ENCODE measurements at regions of chr17 and their contacts with region 1.

Region 1: GRCh38 chr17:29722411-29723198 is 99.9 kb upstream of the CORO6 start:
- DNase-seq: peak; percentile 69
- CTCF ChIP-seq: no peak

Region 2: DNA sequence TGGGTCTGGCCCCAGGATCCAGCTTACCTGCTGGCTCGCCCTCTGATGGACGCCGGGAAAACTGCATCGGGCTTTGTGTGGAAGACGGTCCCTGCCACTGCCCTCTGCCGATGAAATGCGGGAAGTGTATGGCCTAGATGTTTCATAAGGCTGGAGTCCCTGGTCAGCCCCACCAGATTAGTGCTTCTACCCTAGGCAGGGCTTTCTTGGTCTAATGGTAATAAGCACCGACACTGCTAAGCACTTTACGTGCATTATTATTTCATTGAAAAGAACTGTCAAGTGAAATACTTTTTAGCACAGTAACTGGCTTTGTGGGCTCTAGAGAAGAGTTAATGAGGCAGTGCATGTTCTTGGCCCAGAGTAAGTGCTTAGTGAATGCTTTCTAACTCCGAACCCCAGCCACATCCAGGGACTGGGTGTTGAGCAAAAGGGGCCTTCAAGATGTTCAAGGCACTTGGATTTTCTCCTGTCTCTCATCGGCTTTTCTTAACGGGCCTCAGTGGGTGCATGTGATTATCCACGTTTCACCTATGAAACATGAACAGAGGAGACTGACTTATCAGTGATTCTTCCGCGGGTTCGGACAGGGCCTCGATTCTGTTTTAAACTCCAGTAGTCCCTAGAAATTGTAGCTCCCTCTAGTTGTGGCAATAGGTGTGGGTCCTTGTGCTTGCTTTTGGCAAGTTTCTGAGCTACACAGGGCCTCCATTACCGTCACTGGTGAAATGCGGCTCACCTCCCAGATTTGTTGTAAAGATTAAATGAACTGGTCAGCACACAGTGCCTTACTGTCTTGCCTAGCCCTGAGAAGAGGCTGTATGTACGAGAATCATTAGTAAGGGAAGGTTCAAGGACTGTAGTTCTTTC is 972.2 kb before region 1 on chr17:
- CTCF ChIA-PET with region 1: no interaction called
- POLR2A ChIA-PET with region 1: no interaction called
- DNase-seq: peak; percentile 84
- CTCF ChIP-seq: peak; percentile 100

Region 3: GRCh38 chr17:29705386-29705785 is 17.2 kb before region 1 on chr17:
- CTCF ChIA-PET with region 1: interaction called, 18 read pairs
- POLR2A ChIA-PET with region 1: interaction called, 3 read pairs
- DNase-seq: no peak
- CTCF ChIP-seq: no peak

Region 4: GRCh38 chr17:29710891-29711418 is 11.7 kb before region 1 on chr17:
- CTCF ChIA-PET with region 1: interaction called, 33 read pairs
- POLR2A ChIA-PET with region 1: interaction called, 4 read pairs
- DNase-seq: no peak
- CTCF ChIP-seq: no peak

Region 5: GRCh38 chr17:29732613-29733012 is 10.0 kb after region 1 on chr17:
- CTCF ChIA-PET with region 1: interaction called, 13 read pairs
- POLR2A ChIA-PET with region 1: no interaction called
- DNase-seq: no peak
- CTCF ChIP-seq: no peak